ENCODE measurements at regions of chr12 and their contacts with region 1.

Region 1: GRCh38 chr12:121483949-121484348 is 84.0 kb downstream of the RNF34 start:
- DNase-seq: no peak
- ATAC-seq: no peak
- H3K4me3 ChIP-seq: no peak overlapping the region
- H3K27ac ChIP-seq: no peak overlapping the region
- H3K4me1 ChIP-seq: no peaks in the 10 kb centered on the region
- CTCF ChIP-seq: no peak
- EP300 ChIP-seq: no peak
- POLR2A ChIP-seq: no peak
- RAD21 ChIP-seq: no peak

Region 2: GRCh38 chr12:120571299-120571698 is 912.6 kb before region 1 on chr12:
- CTCF ChIA-PET with region 1: no interaction called
- POLR2A ChIA-PET with region 1: no interaction called
- DNase-seq: no peak
- ATAC-seq: no peak
- H3K4me3 ChIP-seq: no peak overlapping the region
- H3K27ac ChIP-seq: no peak overlapping the region
- H3K4me1 ChIP-seq: no peaks in the 10 kb centered on the region
- CTCF ChIP-seq: no peak
- EP300 ChIP-seq: no peak
- POLR2A ChIP-seq: no peak
- RAD21 ChIP-seq: no peak

Region 3: DNA sequence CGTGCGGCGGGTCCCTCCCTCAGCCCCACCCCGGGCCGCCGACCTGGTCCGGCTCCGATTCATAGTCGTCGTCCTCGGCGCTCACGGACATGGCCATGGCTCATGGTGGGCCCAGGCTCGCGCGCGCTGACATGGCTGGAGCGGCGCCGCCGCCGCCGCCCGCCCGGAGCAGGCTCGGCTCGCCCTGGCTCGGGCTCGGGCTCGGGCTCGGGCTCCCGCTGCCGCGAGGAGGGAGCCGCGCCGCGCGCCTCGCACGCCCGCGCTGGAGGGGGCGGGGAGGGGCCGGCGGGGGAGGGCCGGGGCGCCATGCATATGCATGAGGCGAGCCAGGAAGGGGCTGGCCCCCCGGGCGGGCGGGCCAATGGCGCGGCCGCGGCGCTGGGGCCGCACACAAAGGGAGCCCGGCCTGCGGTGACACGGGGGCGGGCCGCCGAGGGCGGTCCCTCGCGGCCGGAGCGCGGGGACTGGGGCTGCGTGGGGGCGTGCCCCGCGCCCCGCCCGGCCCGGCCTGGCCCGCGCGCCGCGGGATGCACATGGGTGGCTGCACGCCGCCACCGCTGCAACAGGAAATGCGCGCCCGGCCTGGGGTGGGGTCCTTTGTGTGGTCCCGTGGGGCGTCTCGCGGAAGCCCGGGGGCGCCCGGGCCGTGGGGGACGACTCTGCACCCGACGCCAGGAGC is 16.7 kb before region 1 on chr12:
- CTCF ChIA-PET with region 1: interaction called, 10 read pairs
- POLR2A ChIA-PET with region 1: interaction called, 3 read pairs
- DNase-seq: peak; percentile 83 to 88
- ATAC-seq: peak; percentile 90 to 95
- H3K4me3 ChIP-seq: peak overlapping the region; percentile 67
- H3K27ac ChIP-seq: peak overlapping the region; percentile 79 to 93
- H3K4me1 ChIP-seq: peaks cover 9% of the 10 kb centered on the region
- CTCF ChIP-seq: no peak
- EP300 ChIP-seq: no peak
- POLR2A ChIP-seq: peak; percentile 65
- RAD21 ChIP-seq: no peak

Region 4: GRCh38 chr12:121579981-121580868 is 96.3 kb after region 1 on chr12:
- CTCF ChIA-PET with region 1: no interaction called
- POLR2A ChIA-PET with region 1: no interaction called
- DNase-seq: peak; percentile 58 to 67
- ATAC-seq: peak; percentile 78 to 80
- H3K4me3 ChIP-seq: peak overlapping the region; percentile 54
- H3K27ac ChIP-seq: peak overlapping the region; percentile 77 to 94
- H3K4me1 ChIP-seq: peaks cover 49% of the 10 kb centered on the region
- CTCF ChIP-seq: no peak
- EP300 ChIP-seq: no peak
- POLR2A ChIP-seq: peak; percentile 47
- RAD21 ChIP-seq: no peak

Region 5: GRCh38 chr12:121610239-121611149 is 126.5 kb after region 1 on chr12:
- CTCF ChIA-PET with region 1: no interaction called
- POLR2A ChIA-PET with region 1: no interaction called
- DNase-seq: no peak
- ATAC-seq: peak; percentile 13 to 55; a peak in 2 of 6 replicates
- H3K4me3 ChIP-seq: no peak overlapping the region
- H3K27ac ChIP-seq: 0 out of 6 replicates have a peak overlapping the region, but pooled peaks of 1 of the 2 experiments have one; percentile 23
- H3K4me1 ChIP-seq: no peaks in the 10 kb centered on the region
- CTCF ChIP-seq: no peak
- EP300 ChIP-seq: no peak
- POLR2A ChIP-seq: no peak
- RAD21 ChIP-seq: no peak